HAP-1 (cell line): ENCODE measurements at regions of chr11 and their contacts with region 1.

Region 1: GRCh38 chr11:58675334-58676155 is 53.1 kb downstream of the CNTF start:
- DNase-seq: peak; percentile 7 to 83
- H3K4me3 ChIP-seq: no peak overlapping the region
- H3K4me1 ChIP-seq: no peaks in the 10 kb centered on the region
- H3K27me3 ChIP-seq: no peaks in the 10 kb centered on the region

Region 2: DNA sequence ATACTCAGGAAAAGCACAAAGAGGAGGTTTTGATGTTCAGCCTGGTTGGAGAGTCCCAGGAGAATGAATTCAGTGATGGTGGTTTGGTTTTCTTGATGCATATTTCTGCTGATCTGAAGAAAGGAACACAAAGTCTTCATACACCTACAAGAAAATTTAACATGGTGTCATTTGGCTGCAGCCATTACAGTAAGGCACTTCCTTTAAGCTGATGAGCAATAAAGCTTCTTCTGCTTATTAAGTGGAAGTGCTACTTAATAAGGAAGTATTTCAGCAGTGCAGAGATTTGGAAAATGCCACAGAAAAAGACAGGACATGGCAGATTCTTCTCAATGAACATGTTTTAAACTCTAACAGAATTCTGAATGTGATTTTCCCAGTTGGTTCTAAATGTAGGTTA is 471.5 kb before region 1 on chr11 and contains the start of gene OR1S2:
- in situ Hi-C with region 1: no loop called
- DNase-seq: no peak
- H3K4me3 ChIP-seq: no peak within 1 kb of the TSS
- H3K4me1 ChIP-seq: no peaks in the 10 kb centered on the region
- H3K27me3 ChIP-seq: no peaks in the 10 kb centered on the region

Region 3: DNA sequence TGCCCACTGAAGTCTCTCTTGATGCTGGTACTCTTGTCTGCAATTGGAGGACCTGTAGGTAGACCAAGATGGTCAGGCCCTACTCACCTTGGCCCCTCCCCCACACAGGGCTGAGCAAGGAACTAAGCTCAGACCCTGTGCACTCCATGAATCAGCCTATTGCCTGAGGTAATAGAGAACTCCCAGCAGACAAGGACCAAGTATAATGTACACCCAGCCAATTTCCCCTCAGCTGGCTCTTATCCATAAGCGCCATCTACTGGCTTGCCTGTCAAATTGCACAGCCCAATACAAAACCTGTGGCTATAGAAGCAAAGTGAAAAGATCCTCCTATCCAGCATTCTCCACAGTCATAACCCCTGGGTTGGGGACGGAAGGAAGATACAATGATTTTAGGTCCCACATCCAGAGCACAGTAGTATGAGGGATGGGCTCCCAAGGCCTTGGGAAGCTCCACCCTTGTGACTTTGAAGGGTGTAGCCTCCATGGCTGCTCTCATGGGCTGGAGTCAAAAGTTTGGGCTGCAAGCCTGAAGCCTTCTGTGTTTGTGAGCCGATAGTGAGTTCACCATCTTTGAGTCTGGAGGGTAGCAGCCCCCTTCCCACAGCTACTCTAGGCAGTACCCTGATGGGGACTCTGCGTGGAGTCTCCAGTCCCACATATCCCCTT is 112.9 kb after region 1 on chr11:
- in situ Hi-C with region 1: loop called (anchors 10 kb)
- DNase-seq: peak; percentile 38 to 43
- H3K4me3 ChIP-seq: no peak overlapping the region
- H3K4me1 ChIP-seq: no peaks in the 10 kb centered on the region
- H3K27me3 ChIP-seq: peaks cover 4% of the 10 kb centered on the region; the same call in 1 of the 2 replicates

Region 4: DNA sequence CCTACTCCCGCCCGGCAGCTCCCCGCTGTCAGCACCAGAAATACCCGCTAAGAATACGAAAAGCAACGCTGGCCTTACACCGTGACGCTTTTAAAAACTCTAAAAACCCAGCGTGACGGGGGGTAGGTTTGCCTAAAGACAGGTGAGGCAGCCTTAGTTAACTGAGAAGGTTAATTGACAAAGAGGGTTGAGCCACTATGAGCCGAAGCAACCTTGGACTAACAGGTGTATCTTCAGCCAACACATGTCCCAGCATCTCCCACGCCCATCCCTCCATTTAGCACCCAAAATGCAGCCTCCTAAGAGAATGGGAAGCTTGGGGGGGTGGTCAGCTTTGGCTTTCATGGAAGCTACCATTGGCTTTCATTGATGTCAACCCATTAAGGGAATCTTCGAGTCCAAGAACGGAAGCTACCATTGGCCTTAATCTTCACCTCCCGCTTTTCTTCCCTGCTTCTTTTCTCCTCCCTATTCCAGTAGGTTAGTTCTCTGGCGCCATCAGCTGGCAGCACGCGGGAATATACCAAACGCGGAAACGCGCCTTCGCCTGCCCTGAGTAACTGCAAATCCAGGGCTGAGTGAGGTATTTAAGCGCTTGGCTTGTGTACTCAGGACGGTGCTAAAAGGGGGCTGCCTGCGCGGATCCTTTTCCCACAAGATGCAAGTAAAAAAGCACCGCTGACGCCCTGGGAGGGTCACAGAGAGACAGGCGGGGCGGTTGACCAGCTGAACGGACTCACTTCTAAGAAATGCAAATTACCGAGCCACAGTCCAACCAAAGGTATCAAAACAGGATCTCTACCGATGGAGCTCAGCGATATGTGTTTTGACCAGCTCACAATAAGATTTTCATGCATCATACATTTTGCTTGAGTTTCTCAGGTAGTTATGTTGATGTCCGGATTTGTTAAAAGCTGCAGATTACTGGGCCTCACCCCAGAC is 225.2 kb after region 1 on chr11:
- in situ Hi-C with region 1: loop called (anchors 10 kb)
- DNase-seq: peak; percentile 74 to 89
- H3K4me3 ChIP-seq: no peak overlapping the region
- H3K4me1 ChIP-seq: no peaks in the 10 kb centered on the region
- H3K27me3 ChIP-seq: no peaks in the 10 kb centered on the region

Region 5: GRCh38 chr11:59680287-59681154 is 1005.0 kb after region 1 on chr11:
- in situ Hi-C with region 1: no loop called
- DNase-seq: peak; percentile 54 to 79
- H3K4me3 ChIP-seq: no peak overlapping the region
- H3K4me1 ChIP-seq: peaks cover 6% of the 10 kb centered on the region
- H3K27me3 ChIP-seq: no peaks in the 10 kb centered on the region; the same call in 1 of the 2 replicates